ENCODE measurements at regions of chr4 and their contacts with region 1.

Region 1: GRCh38 chr4:2630556-2631273 is 94.3 kb downstream of the FAM193A start:
- DNase-seq: no peak
- ATAC-seq: no peak
- H3K4me3 ChIP-seq: no peak overlapping the region
- H3K4me3 Mint-ChIP-seq: no peak overlapping the region
- H3K27ac ChIP-seq: no peak overlapping the region
- H3K27ac Mint-ChIP-seq: no peak overlapping the region
- H3K4me1 ChIP-seq: no peaks in the 10 kb centered on the region
- H3K4me1 Mint-ChIP-seq: no peaks in the 10 kb centered on the region
- H3K27me3 ChIP-seq: no peaks in the 10 kb centered on the region
- H3K27me3 Mint-ChIP-seq: no peaks in the 10 kb centered on the region
- CTCF ChIP-seq: no peak

Region 2: GRCh38 chr4:2402029-2402428 is 228.7 kb before region 1 on chr4:
- CTCF ChIA-PET with region 1: no interaction called
- POLR2A ChIA-PET with region 1: no interaction called
- intact Hi-C with region 1: no loop called
- DNase-seq: no peak
- ATAC-seq: peak; percentile 49
- H3K4me3 ChIP-seq: peak overlapping the region in 2 of 5 experiments; percentile 7 to 24
- H3K4me3 Mint-ChIP-seq: peak overlapping the region; percentile 67
- H3K27ac ChIP-seq: no peak overlapping the region
- H3K27ac Mint-ChIP-seq: no peak overlapping the region
- H3K4me1 ChIP-seq: peaks cover 7 to 11% of the 10 kb centered on the region in 2 donors
- H3K4me1 Mint-ChIP-seq: peaks cover 13% of the 10 kb centered on the region
- H3K27me3 ChIP-seq: peaks cover 0 to 34% (median 9%) of the 10 kb centered on the region in 4 experiments
- H3K27me3 Mint-ChIP-seq: peaks cover 32% of the 10 kb centered on the region
- CTCF ChIP-seq: no peak

Region 3: GRCh38 chr4:2660596-2661211 is 30.0 kb after region 1 on chr4:
- CTCF ChIA-PET with region 1: no interaction called
- POLR2A ChIA-PET with region 1: interaction called, 15 read pairs
- intact Hi-C with region 1: no loop called
- DNase-seq: no peak
- ATAC-seq: no peak
- H3K4me3 ChIP-seq: no peak overlapping the region
- H3K4me3 Mint-ChIP-seq: no peak overlapping the region
- H3K27ac ChIP-seq: no peak overlapping the region
- H3K27ac Mint-ChIP-seq: no peak overlapping the region
- H3K4me1 ChIP-seq: peaks cover 0 to 5% of the 10 kb centered on the region in 2 donors
- H3K4me1 Mint-ChIP-seq: no peaks in the 10 kb centered on the region
- H3K27me3 ChIP-seq: no peaks in the 10 kb centered on the region
- H3K27me3 Mint-ChIP-seq: no peaks in the 10 kb centered on the region
- CTCF ChIP-seq: no peak